Pancreas (tissue), 10 donors: ENCODE measurements at regions of chr20 and their contacts with region 1.

Region 1: GRCh38 chr20:22257912-22258311 is 326.5 kb downstream of the FOXA2 start:
- DNase-seq: no peak
- ATAC-seq: no peak
- H3K4me3 ChIP-seq: no peak overlapping the region
- H3K27ac ChIP-seq: no peak overlapping the region
- H3K4me1 ChIP-seq: no peaks in the 10 kb centered on the region
- H3K27me3 ChIP-seq: peaks cover 0 to 9% (median 0%) of the 10 kb centered on the region in 4 donors
- CTCF ChIP-seq: no peak

Region 2: DNA sequence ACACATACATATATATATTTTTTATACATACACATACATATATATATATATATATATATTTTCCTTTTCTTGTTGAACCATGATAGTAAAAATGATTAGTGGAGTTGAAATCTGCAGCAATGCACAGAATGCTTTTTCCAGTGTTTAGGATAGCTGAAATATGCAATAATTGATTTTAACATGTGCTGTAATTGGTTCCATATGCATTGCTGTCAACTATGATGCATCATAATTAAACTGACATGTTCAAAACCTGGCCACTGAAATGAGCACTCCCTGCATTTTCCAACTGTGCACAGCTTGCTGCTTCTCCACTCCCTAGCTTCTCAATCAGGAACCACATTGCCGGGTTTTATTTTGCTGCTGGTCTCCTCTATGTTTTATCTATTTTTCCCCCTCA is 194.2 kb before region 1 on chr20:
- intact Hi-C with region 1: no loop called
- DNase-seq: no peak
- ATAC-seq: no peak
- H3K4me3 ChIP-seq: no peak overlapping the region
- H3K27ac ChIP-seq: no peak overlapping the region
- H3K4me1 ChIP-seq: no peaks in the 10 kb centered on the region
- H3K27me3 ChIP-seq: no peaks in the 10 kb centered on the region
- CTCF ChIP-seq: no peak

Region 3: GRCh38 chr20:22303523-22303922 is 45.6 kb after region 1 on chr20:
- intact Hi-C with region 1: loop called in 1 of 3 experiments (anchors 10 kb)
- DNase-seq: no peak
- ATAC-seq: no peak
- H3K4me3 ChIP-seq: no peak overlapping the region
- H3K27ac ChIP-seq: no peak overlapping the region
- H3K4me1 ChIP-seq: no peaks in the 10 kb centered on the region
- H3K27me3 ChIP-seq: no peaks in the 10 kb centered on the region
- CTCF ChIP-seq: no peak

Region 4: DNA sequence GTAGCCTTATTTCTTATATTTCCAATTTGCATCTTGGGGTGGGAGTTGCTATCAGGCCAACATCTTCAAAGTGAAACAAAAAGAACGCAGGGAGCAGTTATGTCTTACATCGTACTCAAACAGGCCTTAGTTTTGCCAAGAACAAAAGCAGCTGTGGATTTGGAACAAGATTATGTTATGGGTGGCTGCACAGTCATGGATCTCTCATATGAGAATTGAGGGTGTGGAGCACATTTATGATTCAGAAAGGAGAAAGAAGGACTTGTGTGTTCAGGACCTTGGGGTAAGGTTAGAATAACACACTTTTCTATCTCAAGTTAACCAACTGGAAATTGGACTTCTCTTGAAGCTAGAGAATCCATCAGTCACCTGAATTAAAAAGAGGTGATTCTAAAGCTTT is 66.6 kb after region 1 on chr20:
- intact Hi-C with region 1: no loop called
- DNase-seq: no peak
- ATAC-seq: no peak
- H3K4me3 ChIP-seq: no peak overlapping the region
- H3K27ac ChIP-seq: no peak overlapping the region
- H3K4me1 ChIP-seq: no peaks in the 10 kb centered on the region
- H3K27me3 ChIP-seq: no peaks in the 10 kb centered on the region
- CTCF ChIP-seq: no peak